Head of caudate nucleus (tissue), 42 donors: ENCODE measurements at regions of chr15 and their contacts with region 1.

Region 1: DNA sequence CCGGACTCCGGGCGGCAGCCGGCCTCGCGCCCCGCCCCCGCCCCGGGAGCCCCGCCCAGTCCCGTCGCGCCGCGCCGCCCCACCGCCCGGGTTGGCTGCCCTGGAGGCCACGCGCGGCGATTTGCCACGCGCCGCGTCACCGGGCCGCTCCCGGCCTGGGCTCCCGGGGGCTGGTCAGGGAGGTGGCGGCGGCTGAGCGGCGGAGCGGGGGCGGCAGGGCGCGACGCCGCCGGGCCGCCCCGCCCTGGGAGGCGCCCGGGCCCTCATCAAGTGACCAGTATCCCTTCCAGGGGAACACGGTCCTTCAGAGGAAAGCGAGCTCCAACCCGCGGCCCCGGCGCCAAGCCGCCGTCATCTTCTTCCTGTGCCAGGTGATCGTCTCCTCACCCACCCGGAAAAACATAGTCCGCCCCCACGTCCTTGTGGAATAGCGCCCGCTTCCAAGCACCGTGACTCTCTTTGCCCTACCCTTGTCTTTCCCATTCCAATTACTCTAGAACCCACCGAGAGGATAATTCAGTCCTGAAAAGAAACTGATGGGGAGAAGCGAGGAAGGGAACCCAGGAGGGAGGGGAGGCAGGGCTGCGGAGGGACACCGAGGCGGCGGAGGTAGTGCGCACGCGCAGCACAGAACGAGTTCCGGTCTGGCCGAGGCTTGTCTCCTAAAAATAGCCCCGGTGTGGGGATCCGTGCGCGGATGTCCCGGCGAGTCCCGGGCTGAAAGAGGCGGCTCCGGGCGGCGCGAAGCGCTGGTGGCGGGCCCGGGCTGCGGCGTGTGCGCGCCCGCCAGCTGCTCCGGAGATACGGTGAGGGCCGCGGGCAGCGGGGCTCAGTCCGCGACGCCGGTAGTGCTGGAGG is at the start of gene MEF2A:
- DNase-seq: peak; percentile 81 to 97 (median 93)

Region 2: GRCh38 chr15:99476413-99477222 is 88.9 kb before region 1 on chr15:
- intact Hi-C with region 1: loop called (anchors 5 kb)
- DNase-seq: peak; percentile 33 to 92 (median 70)

Region 3: GRCh38 chr15:99733268-99734039 is 167.9 kb after region 1 on chr15 and contains the start of gene LYSMD4:
- intact Hi-C with region 1: loop called (anchors 10 kb)
- DNase-seq: peak; percentile 96 to 100 (median 99)

Region 4: DNA sequence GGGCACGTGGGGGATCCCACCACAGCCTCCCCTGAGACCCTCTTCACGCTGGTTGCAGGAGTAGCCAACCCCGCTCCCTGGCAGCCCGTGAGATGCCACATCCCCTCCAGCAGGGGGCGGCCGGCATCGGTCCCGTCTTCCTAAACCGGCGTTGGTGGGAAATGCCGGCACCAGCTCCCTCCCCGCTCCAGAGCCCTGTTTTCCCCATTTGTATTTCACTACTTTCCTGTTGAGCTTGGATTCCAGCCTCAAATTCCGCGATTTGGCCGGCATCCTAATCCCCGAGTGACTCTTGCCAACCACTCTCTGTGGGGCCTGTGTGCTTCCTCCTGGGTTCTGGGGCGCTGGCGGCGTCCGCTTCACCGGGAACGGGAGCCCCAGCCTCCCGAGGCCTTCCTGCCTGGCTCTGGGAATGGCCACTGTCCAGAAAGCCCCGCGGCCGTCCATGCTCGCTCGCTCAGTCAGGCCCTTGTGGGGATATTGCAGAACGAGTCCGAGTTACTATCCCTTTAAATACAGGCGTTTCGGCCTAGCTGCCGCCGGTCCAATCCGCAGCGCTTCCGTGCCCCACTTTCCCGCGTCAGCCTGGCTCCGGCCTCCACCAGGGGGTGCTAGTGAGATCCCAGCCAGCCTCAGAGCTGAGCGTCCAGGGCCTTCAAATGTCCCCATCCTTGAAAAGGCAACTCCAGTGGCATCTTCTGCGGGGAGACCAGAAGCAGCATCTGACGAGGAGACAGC is 784.3 kb after region 1 on chr15:
- intact Hi-C with region 1: loop called (anchors 10 kb)
- DNase-seq: peak; percentile 86 to 97 (median 93)